ENCODE measurements at regions of chr6 and their contacts with region 1.

Region 1: DNA sequence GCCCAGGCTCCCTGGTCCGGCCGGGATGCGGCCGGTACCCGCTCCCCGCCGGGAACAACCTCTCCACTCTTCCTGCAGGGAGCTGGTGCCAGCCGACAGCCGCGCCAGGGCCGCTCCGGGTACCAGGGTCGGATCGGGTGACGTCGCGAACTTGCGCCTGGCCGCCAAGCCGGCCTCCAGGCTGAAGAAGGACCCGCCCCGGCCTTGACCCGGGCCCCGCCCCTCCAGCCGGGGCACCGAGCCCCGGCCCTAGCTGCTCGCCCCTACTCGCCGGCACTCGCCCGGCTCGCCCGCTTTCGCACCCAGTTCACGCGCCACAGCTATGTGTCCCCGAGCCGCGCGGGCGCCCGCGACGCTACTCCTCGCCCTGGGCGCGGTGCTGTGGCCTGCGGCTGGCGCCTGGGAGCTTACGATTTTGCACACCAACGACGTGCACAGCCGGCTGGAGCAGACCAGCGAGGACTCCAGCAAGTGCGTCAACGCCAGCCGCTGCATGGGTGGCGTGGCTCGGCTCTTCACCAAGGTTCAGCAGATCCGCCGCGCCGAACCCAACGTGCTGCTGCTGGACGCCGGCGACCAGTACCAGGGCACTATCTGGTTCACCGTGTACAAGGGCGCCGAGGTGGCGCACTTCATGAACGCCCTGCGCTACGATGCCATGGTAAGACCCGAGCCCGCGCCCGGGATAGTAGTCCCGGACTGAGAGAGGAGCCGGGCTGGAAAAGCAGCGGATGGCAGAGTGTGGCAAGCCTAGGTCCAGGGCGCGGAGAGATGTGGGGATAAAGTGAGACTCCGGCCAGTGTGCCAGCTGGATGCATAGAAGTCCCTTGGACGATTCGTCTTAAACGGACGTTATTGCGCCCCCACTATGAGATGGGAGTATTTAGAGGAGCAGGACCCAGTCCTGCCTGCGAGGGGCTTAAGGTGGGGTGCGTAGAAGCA is at the start of gene NT5E:
- DNase-seq: peak; percentile 23 to 81 (median 58)
- ATAC-seq: peak; percentile 62 to 64
- H3K4me3 Mint-ChIP-seq: peak within 1 kb of the TSS; percentile 97 to 100 (median 99)
- H3K27ac Mint-ChIP-seq: peak within 1 kb of the TSS; percentile 91 to 99 (median 98)
- H3K4me1 Mint-ChIP-seq: peaks cover 36 to 71% (median 63%) of the 10 kb centered on the region in 4 donors
- H3K27me3 Mint-ChIP-seq: peaks cover 0 to 18% (median 0%) of the 10 kb centered on the region in 5 donors
- polyA plus RNA-seq, gene NT5E: 77.7 to 128 (median 103) TPM

Region 2: GRCh38 chr6:85404502-85405174 is 45.5 kb before region 1 on chr6:
- POLR2A ChIA-PET with region 1: interaction called, 64 read pairs
- DNase-seq: no peak
- ATAC-seq: peak; percentile 31 to 49
- H3K4me3 Mint-ChIP-seq: peak overlapping the region in 9 of 10 donors; percentile 4 to 74 (median 57)
- H3K27ac Mint-ChIP-seq: peak overlapping the region; percentile 46 to 92 (median 80)
- H3K4me1 Mint-ChIP-seq: peaks cover 38 to 76% (median 71%) of the 10 kb centered on the region in 4 donors
- H3K27me3 Mint-ChIP-seq: no peaks in the 10 kb centered on the region

Region 3: GRCh38 chr6:85460921-85461797 is 11.1 kb after region 1 on chr6:
- POLR2A ChIA-PET with region 1: interaction called, 252 read pairs
- DNase-seq: peak in 9 of 10 donors; percentile 29 to 79 (median 59)
- ATAC-seq: peak; percentile 77 to 81
- H3K4me3 Mint-ChIP-seq: peak overlapping the region; percentile 49 to 85 (median 80)
- H3K27ac Mint-ChIP-seq: peak overlapping the region; percentile 91 to 99 (median 95)
- H3K4me1 Mint-ChIP-seq: peaks cover 69 to 100% (median 96%) of the 10 kb centered on the region in 4 donors
- H3K27me3 Mint-ChIP-seq: peaks cover 0 to 2% (median 0%) of the 10 kb centered on the region in 5 donors

Region 4: GRCh38 chr6:85482905-85483700 is 33.0 kb after region 1 on chr6:
- POLR2A ChIA-PET with region 1: interaction called, 53 read pairs
- DNase-seq: peak; percentile 61 to 88 (median 81)
- ATAC-seq: peak; percentile 92 to 98
- H3K4me3 Mint-ChIP-seq: peak overlapping the region in 3 of 10 donors; percentile 25 to 46 (median 26)
- H3K27ac Mint-ChIP-seq: peak overlapping the region in 7 of 10 donors; percentile 27 to 80 (median 68)
- H3K4me1 Mint-ChIP-seq: peaks cover 14 to 30% (median 21%) of the 10 kb centered on the region in 4 donors
- H3K27me3 Mint-ChIP-seq: no peaks in the 10 kb centered on the region

Region 5: DNA sequence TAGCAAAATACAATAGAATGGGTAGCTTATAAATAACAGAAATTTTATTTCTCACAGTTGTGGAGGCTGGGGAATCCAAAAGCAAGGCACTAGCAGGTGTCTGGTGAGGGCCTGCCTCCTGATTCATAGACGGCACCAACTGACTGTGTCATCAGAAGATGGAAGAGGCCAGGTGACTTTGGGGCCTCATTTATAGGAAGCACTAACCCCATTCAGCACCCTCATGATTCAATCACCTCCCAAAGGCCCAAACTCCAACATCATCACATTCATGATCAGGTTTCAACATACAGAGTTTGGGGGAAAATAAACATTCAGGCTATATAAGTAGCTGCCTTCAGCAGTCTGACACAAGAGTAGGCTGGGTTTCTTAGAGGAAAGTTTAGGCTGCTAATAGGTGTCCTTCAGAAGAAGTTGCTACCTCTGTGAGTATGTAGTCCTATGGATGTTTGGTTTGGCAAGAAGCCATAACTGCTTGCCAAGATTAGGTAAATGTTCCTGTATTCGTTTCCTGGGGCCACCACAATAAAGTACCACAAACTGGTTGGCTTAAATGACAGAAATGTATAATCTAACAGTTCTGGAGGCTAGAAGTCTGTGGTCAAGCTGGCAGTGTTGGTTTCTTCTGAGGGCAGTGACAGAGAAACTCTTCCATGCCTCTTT is 48.6 kb after region 1 on chr6:
- POLR2A ChIA-PET with region 1: no interaction called
- DNase-seq: peak in 2 of 10 donors; percentile 31 to 36
- ATAC-seq: peak; percentile 52 to 67
- H3K4me3 Mint-ChIP-seq: peak overlapping the region in 1 of 10 donors; percentile 22
- H3K27ac Mint-ChIP-seq: peak overlapping the region in 2 of 10 donors; percentile 3 to 80
- H3K4me1 Mint-ChIP-seq: peaks cover 12 to 29% (median 18%) of the 10 kb centered on the region in 4 donors
- H3K27me3 Mint-ChIP-seq: no peaks in the 10 kb centered on the region

Region 6: DNA sequence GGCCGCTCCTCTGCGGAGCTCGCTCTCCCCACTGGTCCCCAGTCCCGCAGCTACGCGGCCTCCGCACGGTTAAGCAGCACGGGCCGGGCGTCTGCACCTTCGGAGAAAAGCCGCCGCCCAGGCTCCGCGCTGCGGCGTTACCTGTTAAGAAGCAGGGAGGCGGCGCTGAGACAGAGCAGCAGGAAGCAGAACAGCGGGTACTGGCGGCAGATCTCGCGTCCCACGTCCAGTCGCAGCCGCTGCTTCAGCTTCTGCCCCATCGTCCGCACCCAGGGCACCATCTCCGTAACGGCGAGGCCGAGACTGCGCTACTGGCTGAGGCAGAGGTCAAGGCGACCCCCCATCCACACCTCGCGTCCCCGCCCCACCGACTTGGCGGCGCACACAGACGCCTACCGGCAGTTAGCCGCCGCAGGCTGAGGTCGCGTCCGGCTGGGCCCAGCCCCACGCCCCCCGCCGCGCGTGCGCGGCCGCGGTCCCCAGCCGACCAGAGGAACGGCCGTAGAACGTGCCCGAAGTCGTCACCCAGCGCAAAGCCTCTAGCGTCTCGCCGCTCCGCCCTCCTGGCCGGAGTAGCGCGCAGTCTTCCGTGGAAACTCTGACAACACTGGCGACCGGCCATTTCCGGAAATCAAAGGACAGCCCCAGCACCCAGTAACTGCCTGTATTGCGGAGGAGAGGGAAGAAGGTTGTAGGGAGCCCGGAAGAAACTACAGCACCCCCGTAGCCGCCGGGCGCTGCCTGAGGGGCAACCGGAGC is 143.5 kb after region 1 on chr6 and contains the start of gene SNX14:
- POLR2A ChIA-PET with region 1: interaction called, 14 read pairs
- DNase-seq: peak; percentile 60 to 90 (median 76)
- ATAC-seq: peak; percentile 82 to 84
- H3K4me3 Mint-ChIP-seq: peak within 1 kb of the TSS; percentile 92 to 99 (median 96)
- H3K27ac Mint-ChIP-seq: peak within 1 kb of the TSS; percentile 92 to 98 (median 98)
- H3K4me1 Mint-ChIP-seq: peaks cover 27 to 56% (median 49%) of the 10 kb centered on the region in 4 donors
- H3K27me3 Mint-ChIP-seq: no peaks in the 10 kb centered on the region
- polyA plus RNA-seq, gene SNX14: 40.9 to 54.6 (median 45.7) TPM

Region 7: GRCh38 chr6:85642774-85643536 is 192.9 kb after region 1 on chr6 and contains the start of gene SYNCRIP:
- POLR2A ChIA-PET with region 1: interaction called, 23 read pairs
- DNase-seq: peak; percentile 97 to 99 (median 98)
- ATAC-seq: peak; percentile 72 to 83
- H3K4me3 Mint-ChIP-seq: peak within 1 kb of the TSS; percentile 91 to 100 (median 96)
- H3K27ac Mint-ChIP-seq: peak within 1 kb of the TSS; percentile 93 to 100 (median 99)
- H3K4me1 Mint-ChIP-seq: peaks cover 28 to 49% (median 45%) of the 10 kb centered on the region in 4 donors
- H3K27me3 Mint-ChIP-seq: no peaks in the 10 kb centered on the region
- polyA plus RNA-seq, gene SYNCRIP: 68.6 to 80.9 (median 70.7) TPM

Measured in naive thymus-derived CD8-positive, alpha-beta T cell (primary cell).